H1 (cell line): ENCODE measurements at regions of chr3 and their contacts with region 1.

Region 1: GRCh38 chr3:62833531-62833930 is 41.7 kb downstream of the CADPS start:
- DNase-seq: no peak
- H3K4me3 ChIP-seq: no peak overlapping the region
- H3K27ac ChIP-seq: no peak overlapping the region
- H3K4me1 ChIP-seq: no peaks in the 10 kb centered on the region
- H3K27me3 ChIP-seq: no peaks in the 10 kb centered on the region
- CTCF ChIP-seq: peak; percentile 63 to 70 (median 70)
- EP300 ChIP-seq: no peak
- POLR2A ChIP-seq: no peak
- RAD21 ChIP-seq: peak; percentile 71 to 80

Region 2: GRCh38 chr3:62622553-62623193 is 210.9 kb before region 1 on chr3:
- CTCF ChIA-PET with region 1: interaction called, 15 read pairs
- POLR2A ChIA-PET with region 1: no interaction called
- DNase-seq: no peak
- H3K4me3 ChIP-seq: no peak overlapping the region
- H3K27ac ChIP-seq: no peak overlapping the region
- H3K4me1 ChIP-seq: no peaks in the 10 kb centered on the region
- H3K27me3 ChIP-seq: no peaks in the 10 kb centered on the region
- CTCF ChIP-seq: peak in 2 of 3 experiments; percentile 61 to 63; a peak in 3 of 4 replicates
- EP300 ChIP-seq: no peak
- POLR2A ChIP-seq: no peak
- RAD21 ChIP-seq: peak; percentile 83 to 88

Region 3: DNA sequence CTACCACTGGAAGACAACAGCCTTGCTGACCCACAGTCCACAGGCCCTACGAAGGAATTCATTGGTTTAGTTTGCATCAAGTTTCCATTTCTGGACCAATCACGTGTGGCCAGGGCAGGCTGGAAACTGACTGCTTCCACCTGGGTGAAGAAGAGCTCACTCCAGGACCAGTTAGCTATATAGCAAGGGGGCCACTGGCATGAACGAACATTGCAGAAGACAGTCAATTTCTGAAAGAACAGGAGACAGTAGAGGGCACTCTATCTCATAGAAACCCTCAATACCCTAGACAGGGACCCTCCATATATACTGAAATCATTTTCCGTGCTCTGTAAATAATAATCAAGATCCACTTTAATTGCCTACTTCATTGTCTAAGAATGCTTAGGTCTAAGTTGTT is 173.9 kb before region 1 on chr3:
- CTCF ChIA-PET with region 1: interaction called, 76 read pairs
- POLR2A ChIA-PET with region 1: no interaction called
- DNase-seq: no peak
- H3K4me3 ChIP-seq: no peak overlapping the region
- H3K27ac ChIP-seq: no peak overlapping the region
- H3K4me1 ChIP-seq: no peaks in the 10 kb centered on the region
- H3K27me3 ChIP-seq: peaks cover 0 to 1% (median 0%) of the 10 kb centered on the region in 4 experiments; a peak in 1 of 7 replicates
- CTCF ChIP-seq: peak in 2 of 3 experiments; percentile 22 to 40; a peak in 2 of 4 replicates
- EP300 ChIP-seq: no peak
- POLR2A ChIP-seq: no peak
- RAD21 ChIP-seq: peak; percentile 25 to 46

Region 4: DNA sequence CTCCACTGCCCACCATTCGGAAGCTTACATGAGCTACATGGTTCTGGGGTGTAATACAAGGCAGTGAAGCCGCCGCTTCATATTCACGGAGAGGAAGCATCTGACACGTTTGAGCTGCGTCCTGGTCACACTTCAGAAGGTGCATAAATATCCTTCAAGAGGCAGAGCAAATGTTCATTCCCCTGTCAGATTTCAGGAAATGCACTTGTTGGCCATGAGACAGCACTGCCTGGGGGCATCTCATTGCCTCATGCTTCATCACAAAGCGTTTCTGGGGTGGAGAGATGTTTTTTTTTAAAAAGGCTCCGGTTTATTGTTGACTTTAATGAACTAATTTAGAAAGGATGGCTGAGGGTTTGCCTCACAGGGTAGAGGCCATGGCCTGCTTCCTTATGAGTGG is 78.2 kb before region 1 on chr3:
- CTCF ChIA-PET with region 1: no interaction called
- POLR2A ChIA-PET with region 1: no interaction called
- DNase-seq: no peak
- H3K4me3 ChIP-seq: no peak overlapping the region
- H3K27ac ChIP-seq: no peak overlapping the region
- H3K4me1 ChIP-seq: no peaks in the 10 kb centered on the region
- H3K27me3 ChIP-seq: no peaks in the 10 kb centered on the region
- CTCF ChIP-seq: no peak
- EP300 ChIP-seq: no peak
- POLR2A ChIP-seq: no peak
- RAD21 ChIP-seq: no peak

Region 5: DNA sequence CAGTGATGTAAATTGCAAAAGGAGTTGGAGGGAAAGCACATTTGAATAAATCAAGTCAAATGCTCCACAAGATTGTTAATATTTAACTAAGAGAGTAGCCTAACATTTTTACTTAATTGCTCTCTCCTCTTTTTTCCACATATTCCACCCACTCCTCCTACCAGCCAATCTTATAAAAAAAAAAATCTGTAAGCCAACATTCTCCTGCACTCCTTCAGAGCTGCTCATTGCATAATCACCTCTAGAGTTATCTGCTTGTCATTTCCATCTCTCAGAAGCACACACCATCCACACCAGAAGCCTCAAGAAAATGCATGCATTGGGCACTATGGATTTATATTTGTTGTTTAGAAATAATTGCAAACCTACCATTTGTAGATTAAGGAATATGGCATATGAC is 22.4 kb before region 1 on chr3:
- CTCF ChIA-PET with region 1: interaction called, 14 read pairs
- POLR2A ChIA-PET with region 1: no interaction called
- DNase-seq: no peak
- H3K4me3 ChIP-seq: no peak overlapping the region
- H3K27ac ChIP-seq: no peak overlapping the region
- H3K4me1 ChIP-seq: peaks cover 0 to 3% (median 0%) of the 10 kb centered on the region in 4 experiments; a peak in 1 of 7 replicates
- H3K27me3 ChIP-seq: no peaks in the 10 kb centered on the region
- CTCF ChIP-seq: no peak
- EP300 ChIP-seq: no peak
- POLR2A ChIP-seq: no peak
- RAD21 ChIP-seq: no peak

Region 6: GRCh38 chr3:62818347-62818746 is 15.2 kb before region 1 on chr3:
- CTCF ChIA-PET with region 1: interaction called, 13 read pairs
- POLR2A ChIA-PET with region 1: no interaction called
- DNase-seq: no peak
- H3K4me3 ChIP-seq: no peak overlapping the region
- H3K27ac ChIP-seq: no peak overlapping the region
- H3K4me1 ChIP-seq: no peaks in the 10 kb centered on the region
- H3K27me3 ChIP-seq: no peaks in the 10 kb centered on the region
- CTCF ChIP-seq: no peak
- EP300 ChIP-seq: no peak
- POLR2A ChIP-seq: no peak
- RAD21 ChIP-seq: no peak

Region 7: GRCh38 chr3:63193629-63194028 is 360.1 kb after region 1 on chr3:
- CTCF ChIA-PET with region 1: interaction called, 12 read pairs
- POLR2A ChIA-PET with region 1: no interaction called
- DNase-seq: no peak
- H3K4me3 ChIP-seq: no peak overlapping the region
- H3K27ac ChIP-seq: no peak overlapping the region
- H3K4me1 ChIP-seq: no peaks in the 10 kb centered on the region
- H3K27me3 ChIP-seq: no peaks in the 10 kb centered on the region
- CTCF ChIP-seq: peak in 2 of 3 experiments; percentile 41 to 47; a peak in 2 of 4 replicates
- EP300 ChIP-seq: no peak
- POLR2A ChIP-seq: no peak
- RAD21 ChIP-seq: peak; percentile 81 to 86

Region 8: GRCh38 chr3:63228087-63229023 is 394.8 kb after region 1 on chr3:
- CTCF ChIA-PET with region 1: interaction called, 10 read pairs
- POLR2A ChIA-PET with region 1: no interaction called
- DNase-seq: no peak
- H3K4me3 ChIP-seq: no peak overlapping the region
- H3K27ac ChIP-seq: no peak overlapping the region
- H3K4me1 ChIP-seq: peaks cover 0 to 7% (median 5%) of the 10 kb centered on the region in 4 experiments; a peak in 5 of 7 replicates
- H3K27me3 ChIP-seq: no peaks in the 10 kb centered on the region
- CTCF ChIP-seq: peak in 2 of 3 experiments; percentile 55 to 64; a peak in 2 of 4 replicates
- EP300 ChIP-seq: no peak
- POLR2A ChIP-seq: no peak
- RAD21 ChIP-seq: peak; percentile 72 to 81